Activated CD8-positive, alpha-beta T cell treated with anti-CD3 and anti-CD28 coated beads for 36 hours (primary cell): ENCODE measurements at regions of chr1 and their contacts with region 1.

Region 1: DNA sequence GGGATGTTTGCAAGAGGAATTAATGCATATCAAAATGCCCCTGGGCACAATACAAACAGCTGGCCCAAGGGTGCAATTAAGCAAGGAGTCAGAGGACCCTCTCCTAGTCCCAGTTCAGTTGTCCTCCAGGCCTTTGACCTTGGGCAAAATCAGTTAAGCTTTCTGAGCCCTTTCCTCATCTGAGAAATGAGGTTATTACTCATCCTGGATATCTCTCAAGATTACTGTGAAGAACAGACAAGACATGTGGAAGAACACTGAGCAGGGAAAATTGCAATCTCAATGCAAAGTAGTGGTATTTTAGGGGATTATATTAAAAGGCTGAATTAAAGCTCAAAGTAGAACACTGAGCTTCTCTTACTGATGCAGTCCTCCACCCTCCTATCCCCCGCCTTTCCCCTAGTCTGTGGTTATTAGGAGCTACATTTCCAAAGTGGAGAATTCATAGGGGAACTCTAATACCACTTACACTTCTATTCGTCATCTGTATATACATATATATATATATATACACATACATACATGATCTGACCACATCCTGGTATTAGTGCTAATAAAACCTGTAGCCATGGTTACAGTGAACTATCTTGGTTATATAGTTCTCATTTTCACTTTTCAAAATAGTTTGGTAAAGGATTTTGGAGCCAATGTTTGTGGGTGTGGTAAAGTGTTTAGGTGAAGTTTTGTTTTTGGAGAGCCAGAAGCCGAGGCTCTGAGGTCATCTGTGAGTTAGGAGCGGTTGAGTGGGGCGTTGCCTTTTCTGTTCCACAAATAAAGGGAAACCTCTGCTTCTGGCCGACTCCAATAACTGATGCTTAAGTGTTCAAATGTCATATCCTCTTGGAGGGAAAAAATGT is 18.0 kb downstream of the KIAA0040 start:
- DNase-seq: no peak
- ATAC-seq: no peak
- H3K4me3 Mint-ChIP-seq: no peak overlapping the region
- H3K27ac Mint-ChIP-seq: no peak overlapping the region
- H3K4me1 Mint-ChIP-seq: peaks cover 45% of the 10 kb centered on the region
- H3K27me3 Mint-ChIP-seq: no peaks in the 10 kb centered on the region
- CTCF ChIP-seq: no peak

Region 2: GRCh38 chr1:175244206-175244605 is 69.7 kb after region 1 on chr1:
- CTCF ChIA-PET with region 1: no interaction called
- POLR2A ChIA-PET with region 1: no interaction called
- intact Hi-C with region 1: loop called (anchors 10 kb)
- DNase-seq: no peak
- ATAC-seq: no peak
- H3K4me3 Mint-ChIP-seq: no peak overlapping the region
- H3K27ac Mint-ChIP-seq: no peak overlapping the region
- H3K4me1 Mint-ChIP-seq: no peaks in the 10 kb centered on the region
- H3K27me3 Mint-ChIP-seq: no peaks in the 10 kb centered on the region
- CTCF ChIP-seq: no peak